Tibial artery (tissue), 4 donors: ENCODE measurements at regions of chr20 and their contacts with region 1.

Region 1: DNA sequence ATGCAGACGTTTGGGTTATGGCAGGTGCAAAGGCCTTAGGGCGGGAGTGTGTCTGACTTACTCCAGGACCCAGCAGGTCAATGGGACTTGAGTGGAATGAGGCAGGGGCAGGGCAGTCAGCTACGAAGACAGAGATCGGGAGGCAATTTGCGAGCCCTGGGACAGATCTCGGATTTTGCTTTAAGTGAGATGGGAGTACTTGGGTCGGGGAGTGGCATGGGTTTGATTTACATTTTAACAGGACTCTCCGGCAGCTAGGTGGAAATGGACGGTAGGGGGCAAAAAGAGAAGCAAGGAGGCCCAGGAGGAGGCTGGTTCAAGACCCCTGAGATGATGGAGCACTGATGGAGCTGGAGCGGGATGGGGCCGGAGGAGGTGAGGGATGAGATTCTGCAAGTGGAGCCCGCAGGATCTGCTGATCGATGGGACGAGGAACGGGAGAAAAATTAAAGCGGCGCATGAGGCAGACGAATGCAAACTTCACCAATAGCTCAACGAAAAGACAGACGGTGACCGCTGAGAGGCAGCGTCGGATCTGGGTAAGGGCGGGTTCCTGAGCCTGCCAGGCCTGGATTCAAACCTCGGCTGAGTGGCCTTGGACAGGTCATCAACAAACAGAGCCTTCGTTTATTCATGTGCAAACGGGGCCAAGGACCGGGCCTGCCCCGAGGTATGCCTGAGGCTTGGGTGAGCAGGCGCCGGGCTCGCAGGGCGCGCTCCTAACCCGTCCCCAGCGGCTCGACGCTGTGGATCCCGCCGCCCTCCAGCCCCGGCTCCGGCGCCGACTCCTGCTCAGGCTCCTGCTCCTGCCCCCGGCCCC is 756 bp upstream of the RBCK1 start:
- DNase-seq: peak; percentile 75 to 87
- H3K4me3 ChIP-seq: peak overlapping the region; percentile 89 to 100
- H3K27ac ChIP-seq: peak overlapping the region; percentile 90 to 94
- H3K4me1 ChIP-seq: peaks cover 0 to 26% (median 16%) of the 10 kb centered on the region in 4 donors
- H3K27me3 ChIP-seq: no peaks in the 10 kb centered on the region
- CTCF ChIP-seq: no peak

Region 2: GRCh38 chr20:462199-462991 is 55.1 kb after region 1 on chr20 and contains the start of gene TBC1D20:
- intact Hi-C with region 1: loop called (anchors 5 kb)
- DNase-seq: peak; percentile 80 to 91
- H3K4me3 ChIP-seq: peak within 1 kb of the TSS; percentile 83 to 84
- H3K27ac ChIP-seq: peak within 1 kb of the TSS; percentile 91 to 92
- H3K4me1 ChIP-seq: peaks cover 0 to 39% (median 17%) of the 10 kb centered on the region in 4 donors
- H3K27me3 ChIP-seq: peaks cover 0 to under 1% of the 10 kb centered on the region in 2 donors
- CTCF ChIP-seq: no peak

Region 3: GRCh38 chr20:543369-544152 is 136.2 kb after region 1 on chr20 and contains the start of gene CSNK2A1:
- intact Hi-C with region 1: loop called (anchors 5 kb)
- DNase-seq: peak; percentile 92 to 97
- H3K4me3 ChIP-seq: peak within 1 kb of the TSS; percentile 92 to 96
- H3K27ac ChIP-seq: peak within 1 kb of the TSS; percentile 90 to 94
- H3K4me1 ChIP-seq: peaks cover 0 to 50% (median 40%) of the 10 kb centered on the region in 4 donors
- H3K27me3 ChIP-seq: no peaks in the 10 kb centered on the region
- CTCF ChIP-seq: peak in 1 of 2 experiments; percentile 17